Activated CD8-positive, alpha-beta T cell treated with anti-CD3 and anti-CD28 coated beads for 36 hours (primary cell): ENCODE measurements at regions of chr3 and their contacts with region 1.

Region 1: GRCh38 chr3:43296565-43296964 is 10.2 kb downstream of the SNRK start:
- DNase-seq: peak; percentile 79
- ATAC-seq: peak; percentile 86
- H3K4me3 Mint-ChIP-seq: peak overlapping the region; percentile 70
- H3K27ac Mint-ChIP-seq: peak overlapping the region; percentile 91
- H3K4me1 Mint-ChIP-seq: peaks cover 71% of the 10 kb centered on the region
- H3K27me3 Mint-ChIP-seq: no peaks in the 10 kb centered on the region
- CTCF ChIP-seq: no peak

Region 2: GRCh38 chr3:43162230-43163084 is 134.1 kb before region 1 on chr3:
- CTCF ChIA-PET with region 1: interaction called, 14 read pairs
- POLR2A ChIA-PET with region 1: no interaction called
- intact Hi-C with region 1: no loop called
- DNase-seq: peak; percentile 49
- ATAC-seq: peak; percentile 75
- H3K4me3 Mint-ChIP-seq: peak overlapping the region; percentile 65
- H3K27ac Mint-ChIP-seq: peak overlapping the region; percentile 96
- H3K4me1 Mint-ChIP-seq: peaks cover 20% of the 10 kb centered on the region
- H3K27me3 Mint-ChIP-seq: no peaks in the 10 kb centered on the region
- CTCF ChIP-seq: peak; percentile 58

Region 3: DNA sequence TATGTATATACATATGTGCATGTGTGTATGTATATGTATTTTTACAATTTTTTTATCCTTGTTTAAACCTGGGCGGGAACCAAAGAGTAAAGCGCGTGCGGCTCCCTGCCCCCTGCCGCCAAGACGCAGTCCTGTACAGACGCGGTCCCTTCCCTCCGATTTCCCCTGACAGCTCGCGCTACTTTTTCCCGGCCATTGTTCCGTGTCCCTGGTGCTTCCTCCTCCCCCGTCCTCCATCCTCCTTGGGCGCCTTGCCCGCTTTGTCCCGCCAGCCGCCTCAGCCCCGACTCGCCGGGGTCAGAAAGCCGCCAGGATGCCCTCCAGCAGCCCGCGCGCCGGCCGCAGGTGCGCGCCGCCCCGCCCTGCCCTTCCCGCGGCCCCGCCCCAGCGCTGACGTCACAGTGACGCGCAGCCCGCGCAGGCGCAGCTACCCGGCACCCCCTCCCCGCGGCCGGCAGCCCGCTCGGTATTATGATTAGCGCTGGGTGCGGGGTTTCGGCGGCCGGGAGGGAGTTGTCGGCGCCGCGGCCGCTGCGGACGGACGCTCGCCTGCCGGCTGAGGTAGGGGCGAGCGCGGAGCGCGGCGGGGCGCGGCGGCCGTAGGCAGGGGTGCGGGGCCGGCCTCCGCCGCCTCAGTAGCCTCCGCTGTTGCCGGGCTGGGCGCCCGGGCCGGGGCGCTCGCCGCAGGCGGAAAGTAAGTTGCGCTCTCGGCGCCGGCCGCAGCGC is 10.3 kb before region 1 on chr3 and contains the start of gene SNRK:
- CTCF ChIA-PET with region 1: interaction called, 11 read pairs
- POLR2A ChIA-PET with region 1: interaction called, 12 read pairs
- intact Hi-C with region 1: no loop called
- DNase-seq: peak; percentile 89
- ATAC-seq: peak; percentile 83
- H3K4me3 Mint-ChIP-seq: peak within 1 kb of the TSS; percentile 92
- H3K27ac Mint-ChIP-seq: peak within 1 kb of the TSS; percentile 98
- H3K4me1 Mint-ChIP-seq: peaks cover 35% of the 10 kb centered on the region
- H3K27me3 Mint-ChIP-seq: no peaks in the 10 kb centered on the region
- CTCF ChIP-seq: peak; percentile 53
- total RNA-seq, gene SNRK: 28.9 to 29.2 TPM

Region 4: GRCh38 chr3:43319794-43320193 is 23.2 kb after region 1 on chr3:
- CTCF ChIA-PET with region 1: interaction called, 10 read pairs
- POLR2A ChIA-PET with region 1: interaction called, 4 read pairs
- intact Hi-C with region 1: no loop called
- DNase-seq: no peak
- ATAC-seq: no peak
- H3K4me3 Mint-ChIP-seq: no peak overlapping the region
- H3K27ac Mint-ChIP-seq: peak overlapping the region; percentile 58
- H3K4me1 Mint-ChIP-seq: peaks cover 92% of the 10 kb centered on the region
- H3K27me3 Mint-ChIP-seq: no peaks in the 10 kb centered on the region
- CTCF ChIP-seq: no peak